GM18951 (cell line): ENCODE measurements at regions of chr4 and their contacts with region 1.

Region 1: DNA sequence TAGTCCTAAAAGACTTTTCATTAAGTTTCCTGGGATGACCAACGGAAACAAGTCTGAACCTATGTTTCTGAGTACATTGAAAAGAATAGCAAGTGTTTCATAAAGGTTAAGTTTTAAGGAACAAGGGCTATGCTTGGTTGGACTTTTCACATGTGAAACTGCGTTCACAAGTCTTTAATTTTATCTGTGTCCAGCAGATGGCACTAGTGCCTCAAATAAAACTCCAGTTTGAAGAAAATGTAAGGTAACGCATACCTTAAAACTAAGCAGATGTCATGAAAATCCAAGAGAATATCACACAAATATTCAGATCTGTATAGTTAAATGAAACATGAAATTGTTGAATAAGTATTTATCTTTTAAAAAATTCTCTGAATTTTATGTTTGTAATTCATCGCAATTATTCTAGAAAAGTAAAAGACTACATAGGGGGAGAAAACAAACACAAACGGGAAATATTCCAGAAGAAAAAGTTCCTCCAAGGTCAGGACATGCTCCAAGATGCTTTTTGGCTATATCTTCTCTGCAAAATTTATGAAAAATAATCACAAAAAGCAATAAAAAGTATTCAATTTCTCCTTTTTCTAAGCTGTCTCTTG is 89.6 kb upstream of the MAD2L1 start:
- POLR2A ChIP-seq: no peak

Region 2: DNA sequence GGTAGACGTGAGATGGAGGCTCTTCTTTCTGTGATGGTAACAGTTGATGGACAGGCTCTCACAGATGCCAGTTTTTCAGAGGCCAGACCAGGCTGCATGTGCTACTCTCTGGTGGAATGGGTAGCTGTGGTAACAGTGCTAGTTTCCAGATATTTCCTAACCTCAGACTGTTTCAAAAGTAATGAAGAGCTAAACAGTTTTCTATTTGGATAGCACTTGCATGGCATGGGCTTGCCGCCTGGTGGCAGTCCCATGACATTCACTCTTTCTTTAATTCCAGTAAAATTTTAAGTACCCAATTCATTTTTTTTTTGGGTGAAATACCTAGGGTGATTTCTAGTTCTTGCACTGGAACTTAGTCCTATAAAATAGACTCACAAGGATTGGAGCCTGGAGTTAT is 130.6 kb after region 1 on chr4:
- in situ Hi-C with region 1: no loop called
- POLR2A ChIP-seq: no peak

Region 3: DNA sequence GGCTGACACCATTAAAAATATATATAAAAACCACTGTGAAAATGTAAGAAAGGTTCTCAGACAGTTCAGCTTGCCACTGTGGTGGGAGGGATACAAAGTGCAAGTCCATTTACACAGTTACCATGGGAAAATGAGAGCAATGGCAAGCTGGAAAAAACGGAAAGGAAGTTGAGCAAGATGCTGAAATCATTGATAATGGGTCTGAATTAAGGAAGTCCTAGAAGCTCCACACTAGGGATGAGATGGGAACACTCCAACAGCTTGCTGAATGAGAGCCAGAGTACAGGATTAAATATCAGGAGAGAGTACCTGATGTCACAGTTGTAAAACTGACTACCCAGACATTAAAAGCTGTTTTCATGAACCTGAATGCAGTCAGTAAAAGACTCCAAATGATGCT is 547.7 kb after region 1 on chr4:
- in situ Hi-C with region 1: no loop called
- POLR2A ChIP-seq: no peak

Region 4: GRCh38 chr4:121096629-121097028 is 940.4 kb after region 1 on chr4:
- in situ Hi-C with region 1: loop called (anchors 25 kb)
- POLR2A ChIP-seq: no peak

Region 5: DNA sequence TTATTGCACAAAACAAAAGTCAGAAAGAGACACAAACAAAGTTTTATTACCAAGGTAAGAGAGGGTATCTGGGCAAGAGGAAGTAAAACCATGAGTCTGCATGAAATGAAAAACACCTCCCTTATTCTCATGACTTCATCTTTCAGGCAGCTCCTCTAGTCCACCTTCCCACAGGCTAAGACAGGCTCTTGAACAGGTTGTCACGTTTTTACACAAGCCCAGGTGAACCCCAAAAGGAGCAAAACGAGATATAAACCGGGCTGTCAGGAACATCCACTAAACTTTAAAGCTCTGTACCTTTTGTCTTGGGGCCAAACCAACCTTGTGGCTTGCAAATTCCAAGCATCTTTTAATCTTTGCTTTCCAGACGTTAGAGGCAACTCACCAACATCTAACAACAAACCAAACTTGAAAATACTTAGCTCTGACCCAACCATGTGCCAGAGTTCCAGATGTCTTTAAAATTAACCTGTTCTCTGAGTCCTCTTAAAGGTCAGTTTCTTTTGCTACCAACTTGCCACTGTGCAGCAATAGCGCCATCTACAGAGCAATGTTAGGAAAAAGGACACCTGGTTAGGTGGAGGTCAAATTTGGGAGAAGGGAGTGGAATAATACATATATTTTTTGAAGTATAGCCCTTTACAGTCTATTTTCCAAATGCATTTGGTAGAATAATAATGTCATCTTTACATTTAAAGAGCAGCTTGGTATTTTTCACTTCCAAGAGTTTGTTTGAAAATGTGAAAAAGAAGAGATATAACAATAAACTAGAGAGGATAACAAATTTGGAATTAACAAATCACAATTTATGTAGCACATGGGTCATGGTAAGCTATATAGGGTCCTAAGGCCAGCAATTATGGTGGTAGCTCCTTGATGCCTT is 1151.5 kb after region 1 on chr4:
- in situ Hi-C with region 1: no loop called
- POLR2A ChIP-seq: no peak